Activated CD4-positive, alpha-beta memory T cell treated with anti-CD3 and anti-CD28 coated beads for 36 hours (primary cell): ENCODE measurements at regions of chr5 and their contacts with region 1.

Region 1: GRCh38 chr5:143057580-143057999 is 287.4 kb downstream of the ARHGAP26 start:
- DNase-seq: no peak
- H3K4me3 Mint-ChIP-seq: no peak overlapping the region
- H3K27ac Mint-ChIP-seq: peak overlapping the region; percentile 85
- H3K4me1 Mint-ChIP-seq: peaks cover 69% of the 10 kb centered on the region
- H3K27me3 Mint-ChIP-seq: no peaks in the 10 kb centered on the region

Region 2: DNA sequence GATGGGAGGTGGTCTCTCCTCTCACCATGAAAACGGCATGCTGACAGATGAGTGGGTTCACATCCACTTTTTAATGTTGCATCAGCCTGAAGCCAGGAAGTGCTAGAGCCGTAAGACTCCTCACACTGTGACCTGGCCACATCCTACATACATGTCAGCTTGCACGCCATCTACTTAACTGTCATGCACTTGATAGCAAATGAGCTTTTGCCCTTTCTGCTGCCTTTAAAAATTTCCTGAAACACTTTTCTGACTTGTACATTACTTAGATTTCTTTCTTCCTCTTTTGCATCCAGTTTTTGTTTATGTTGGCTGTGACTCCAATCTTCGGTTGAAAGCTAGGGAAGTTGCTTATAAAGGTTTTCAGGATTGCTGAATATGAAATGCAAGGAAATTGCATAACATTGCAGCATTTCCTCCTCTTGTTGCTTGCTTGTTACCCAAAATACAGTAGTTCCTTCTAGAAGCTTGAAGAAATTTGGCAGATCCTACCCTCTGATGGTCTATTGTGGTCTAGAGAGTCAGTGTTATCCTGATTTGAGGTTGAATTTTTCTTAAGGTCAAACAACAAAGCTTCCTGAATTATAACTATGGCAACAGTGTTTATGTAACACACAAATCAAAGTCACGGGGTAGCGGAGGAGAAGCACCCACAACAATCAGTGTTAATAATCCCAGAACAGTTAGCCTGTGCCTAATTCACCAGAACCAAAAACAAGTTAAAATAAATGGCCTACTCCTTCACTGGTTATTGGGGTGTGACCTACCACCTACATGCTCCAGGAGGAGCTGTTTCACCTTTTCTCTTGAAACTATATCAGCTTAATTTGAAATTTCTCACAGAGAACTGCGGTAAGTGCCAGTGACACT is 54.9 kb before region 1 on chr5:
- CTCF ChIA-PET with region 1: no interaction called
- POLR2A ChIA-PET with region 1: no interaction called
- intact Hi-C with region 1: loop called (anchors 1 kb)
- DNase-seq: peak; percentile 79
- H3K4me3 Mint-ChIP-seq: peak overlapping the region; percentile 52
- H3K27ac Mint-ChIP-seq: peak overlapping the region; percentile 91
- H3K4me1 Mint-ChIP-seq: peaks cover 56% of the 10 kb centered on the region
- H3K27me3 Mint-ChIP-seq: no peaks in the 10 kb centered on the region

Region 3: GRCh38 chr5:143033535-143034250 is 23.9 kb before region 1 on chr5:
- CTCF ChIA-PET with region 1: interaction called, 3 read pairs
- POLR2A ChIA-PET with region 1: interaction called, 3 read pairs
- intact Hi-C with region 1: loop called (anchors 1 kb)
- DNase-seq: no peak
- H3K4me3 Mint-ChIP-seq: no peak overlapping the region
- H3K27ac Mint-ChIP-seq: no peak overlapping the region
- H3K4me1 Mint-ChIP-seq: peaks cover 58% of the 10 kb centered on the region
- H3K27me3 Mint-ChIP-seq: no peaks in the 10 kb centered on the region

Region 4: DNA sequence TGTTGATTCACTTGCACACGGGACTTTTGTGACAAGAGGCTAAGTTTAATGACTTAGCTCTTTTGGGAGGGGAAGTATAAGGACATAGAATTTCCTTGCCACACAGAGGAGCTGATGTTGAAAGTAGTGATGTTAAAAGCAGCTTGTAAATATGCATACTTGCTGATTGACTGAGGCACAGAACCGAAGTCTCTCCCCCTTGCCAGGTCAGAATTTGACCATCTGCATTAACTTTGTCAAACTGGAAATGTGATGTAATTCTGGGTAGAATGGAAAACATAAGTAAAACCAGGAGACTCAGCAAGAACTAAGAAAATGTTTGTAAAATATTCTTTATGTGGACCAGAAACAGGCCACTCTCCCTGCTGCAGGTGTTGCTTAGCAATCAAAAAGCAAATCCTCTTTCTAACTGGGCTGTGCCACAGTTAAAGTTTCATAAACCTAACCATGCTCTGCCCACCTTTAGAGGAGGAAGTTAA is 61.7 kb after region 1 on chr5:
- CTCF ChIA-PET with region 1: interaction called, 3 read pairs
- POLR2A ChIA-PET with region 1: no interaction called
- intact Hi-C with region 1: loop called (anchors 1 kb)
- DNase-seq: peak; percentile 27
- H3K4me3 Mint-ChIP-seq: no peak overlapping the region
- H3K27ac Mint-ChIP-seq: peak overlapping the region; percentile 82
- H3K4me1 Mint-ChIP-seq: peaks cover 41% of the 10 kb centered on the region
- H3K27me3 Mint-ChIP-seq: no peaks in the 10 kb centered on the region

Region 5: GRCh38 chr5:143129910-143130612 is 72.5 kb after region 1 on chr5:
- CTCF ChIA-PET with region 1: no interaction called
- POLR2A ChIA-PET with region 1: no interaction called
- intact Hi-C with region 1: no loop called
- DNase-seq: no peak
- H3K4me3 Mint-ChIP-seq: no peak overlapping the region
- H3K27ac Mint-ChIP-seq: no peak overlapping the region
- H3K4me1 Mint-ChIP-seq: no peaks in the 10 kb centered on the region
- H3K27me3 Mint-ChIP-seq: no peaks in the 10 kb centered on the region

Region 6: DNA sequence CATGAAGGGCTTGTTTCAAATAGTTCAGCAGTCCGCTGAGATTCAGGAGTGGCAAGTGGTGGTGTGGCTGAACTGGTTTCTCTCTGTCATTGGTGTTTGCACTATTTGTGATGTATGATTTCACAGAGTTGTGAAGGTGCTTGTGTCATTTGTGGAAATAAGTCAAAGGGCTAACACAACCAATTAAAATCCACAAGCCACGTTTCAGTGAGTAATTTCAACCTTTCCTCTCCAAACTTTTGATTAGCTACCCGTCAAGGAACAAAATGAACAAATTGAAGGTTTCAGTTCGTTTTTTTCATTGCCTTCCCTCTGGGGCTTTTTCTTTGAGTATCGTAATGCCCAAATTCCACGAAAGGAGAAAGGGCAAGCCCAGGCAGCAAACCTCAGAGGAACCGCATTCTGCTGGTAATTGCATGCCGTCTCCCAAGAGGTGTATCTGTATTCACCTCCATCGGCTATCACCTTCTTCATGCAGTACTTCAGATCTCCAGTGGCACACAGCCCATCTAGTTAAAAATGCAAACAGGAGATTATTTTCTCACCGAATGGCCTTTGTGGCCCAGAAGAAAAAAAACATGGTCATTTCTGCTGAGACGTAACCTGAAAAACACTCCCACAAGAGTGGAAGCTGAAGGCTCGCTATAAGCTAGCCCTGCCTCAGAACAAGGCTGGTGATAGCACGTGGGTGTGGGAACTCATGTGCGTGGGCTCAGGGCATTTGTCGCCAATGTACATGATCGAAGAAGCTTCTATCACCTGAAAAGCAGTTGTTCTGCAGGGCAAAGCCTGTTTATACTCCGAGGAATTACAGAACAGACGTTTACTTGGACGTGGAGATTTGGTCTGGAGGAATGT is 148.8 kb after region 1 on chr5:
- CTCF ChIA-PET with region 1: interaction called, 5 read pairs
- POLR2A ChIA-PET with region 1: no interaction called
- intact Hi-C with region 1: loop called (anchors 1 kb)
- DNase-seq: peak; percentile 65
- H3K4me3 Mint-ChIP-seq: peak overlapping the region; percentile 5
- H3K27ac Mint-ChIP-seq: peak overlapping the region; percentile 73
- H3K4me1 Mint-ChIP-seq: peaks cover 35% of the 10 kb centered on the region
- H3K27me3 Mint-ChIP-seq: peaks cover 2% of the 10 kb centered on the region

Region 7: GRCh38 chr5:143279698-143280097 is 222.1 kb after region 1 on chr5:
- CTCF ChIA-PET with region 1: no interaction called
- POLR2A ChIA-PET with region 1: no interaction called
- intact Hi-C with region 1: no loop called
- DNase-seq: no peak
- H3K4me3 Mint-ChIP-seq: no peak overlapping the region
- H3K27ac Mint-ChIP-seq: no peak overlapping the region
- H3K4me1 Mint-ChIP-seq: peaks cover 2% of the 10 kb centered on the region
- H3K27me3 Mint-ChIP-seq: no peaks in the 10 kb centered on the region

Region 8: DNA sequence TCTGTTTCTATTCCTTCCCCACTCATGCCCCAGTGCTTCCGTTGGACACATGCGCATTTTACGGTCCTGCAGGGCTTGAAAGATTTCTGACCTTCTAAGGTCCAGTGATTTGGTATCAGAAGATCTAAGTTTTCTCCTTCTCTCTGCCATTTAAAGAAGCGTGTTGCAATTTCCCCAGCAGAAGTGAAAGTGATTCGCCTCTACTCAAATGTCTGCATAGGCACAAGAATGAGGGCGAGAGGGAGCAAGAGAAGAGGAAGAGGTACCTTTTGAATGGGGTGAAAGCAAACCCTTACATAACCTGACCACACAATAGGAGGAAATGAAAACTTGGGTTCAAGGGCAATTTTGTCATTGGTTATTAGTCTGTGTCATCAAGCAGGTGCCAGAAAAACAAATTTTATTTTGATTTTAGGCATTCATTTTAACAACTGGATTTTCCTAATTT is 377.6 kb after region 1 on chr5:
- CTCF ChIA-PET with region 1: no interaction called
- POLR2A ChIA-PET with region 1: no interaction called
- intact Hi-C with region 1: loop called (anchors 2 kb)
- DNase-seq: peak; percentile 51
- H3K4me3 Mint-ChIP-seq: peak overlapping the region; percentile 81
- H3K27ac Mint-ChIP-seq: peak overlapping the region; percentile 87
- H3K4me1 Mint-ChIP-seq: peaks cover 68% of the 10 kb centered on the region
- H3K27me3 Mint-ChIP-seq: no peaks in the 10 kb centered on the region